ENCODE measurements at regions of chr4 and their contacts with region 1.

Region 1: DNA sequence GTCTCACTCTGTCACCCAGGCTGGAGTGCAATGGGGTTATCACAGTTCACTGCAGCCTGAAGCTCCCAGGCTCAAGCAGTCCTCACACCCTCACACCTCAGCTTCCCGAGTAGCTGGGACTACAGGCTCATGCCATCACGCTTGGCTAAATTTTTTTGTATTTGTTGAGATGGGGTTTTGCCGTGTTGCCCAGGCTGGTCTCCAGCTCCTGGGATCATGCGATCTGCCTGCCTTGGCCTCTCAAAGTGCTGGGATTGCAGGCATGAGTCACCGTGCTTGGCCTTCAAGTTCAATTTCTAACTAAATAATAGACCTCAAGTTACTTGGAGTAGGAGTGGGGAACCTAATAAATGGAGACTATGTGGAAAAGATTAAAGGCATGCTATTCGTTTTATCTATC is 48.9 kb downstream of the MND1 start:
- DNase-seq: no peak
- ATAC-seq: no peak
- H3K4me3 ChIP-seq: no peak overlapping the region
- H3K4me3 Mint-ChIP-seq: no peak overlapping the region
- H3K27ac ChIP-seq: no peak overlapping the region
- H3K27ac Mint-ChIP-seq: no peak overlapping the region
- H3K4me1 ChIP-seq: no peaks in the 10 kb centered on the region
- H3K4me1 Mint-ChIP-seq: peaks cover 3% of the 10 kb centered on the region in 3 donors
- H3K27me3 ChIP-seq: no peaks in the 10 kb centered on the region
- H3K27me3 Mint-ChIP-seq: no peaks in the 10 kb centered on the region

Region 2: GRCh38 chr4:153344131-153345010 is 49.0 kb before region 1 on chr4 and contains the start of gene MND1:
- CTCF ChIA-PET with region 1: interaction called in 1 of 2 experiments, 10 read pairs
- POLR2A ChIA-PET with region 1: no interaction called
- DNase-seq: peak; percentile 69 to 93 (median 86)
- ATAC-seq: peak; percentile 90 to 95 (median 92)
- H3K4me3 ChIP-seq: peak within 1 kb of the TSS; percentile 82 to 95
- H3K4me3 Mint-ChIP-seq: peak within 1 kb of the TSS; percentile 84 to 95 (median 92)
- H3K27ac ChIP-seq: no peak within 1 kb of the TSS
- H3K27ac Mint-ChIP-seq: peak within 1 kb of the TSS; percentile 49 to 50
- H3K4me1 ChIP-seq: peaks cover 6 to 11% of the 10 kb centered on the region in 2 experiments
- H3K4me1 Mint-ChIP-seq: peaks cover 9 to 30% (median 15%) of the 10 kb centered on the region in 3 donors
- H3K27me3 ChIP-seq: no peaks in the 10 kb centered on the region
- H3K27me3 Mint-ChIP-seq: peaks cover 0 to 7% of the 10 kb centered on the region in 2 donors
- total RNA-seq, gene MND1: 0.53 to 1.1 (median 0.70) TPM in 3 of 5 donors, not detected in the others

Region 3: DNA sequence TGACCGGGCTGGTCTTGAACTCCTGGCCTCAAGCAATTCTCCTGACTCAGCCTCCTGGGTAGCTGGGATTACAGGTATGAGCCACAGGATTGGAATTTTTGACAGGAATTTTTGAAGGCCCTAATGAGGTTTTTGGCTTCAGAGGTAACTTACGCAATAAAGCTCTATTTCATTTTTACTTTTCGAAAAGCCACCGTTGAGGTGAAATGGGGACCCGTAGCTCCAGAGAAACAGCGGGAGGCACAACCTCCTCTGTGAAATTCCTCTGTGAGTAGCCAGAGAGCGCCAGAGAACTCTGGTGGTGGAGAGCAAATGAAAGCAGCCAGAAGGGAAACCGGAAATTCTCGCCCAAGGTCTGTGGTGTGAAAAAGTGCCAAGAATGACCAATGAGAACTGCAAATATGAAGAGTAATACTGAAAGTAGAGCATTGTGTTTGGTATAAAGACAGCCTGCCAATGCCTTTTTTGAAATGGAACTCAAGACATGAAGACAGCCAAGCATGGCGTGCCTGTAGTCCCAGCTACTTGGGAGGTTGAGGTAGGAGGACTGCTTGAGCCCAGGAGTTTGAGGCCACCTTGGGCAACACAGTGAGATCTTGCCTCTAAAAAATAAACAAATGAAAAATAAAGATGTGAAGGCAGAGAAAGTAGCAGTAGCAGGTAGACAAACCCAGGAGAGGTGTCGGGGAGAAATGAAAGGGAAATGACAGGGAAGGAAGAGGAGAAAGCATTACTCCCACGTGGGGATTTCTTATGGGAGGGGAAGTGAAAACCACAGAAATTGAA is 39.8 kb after region 1 on chr4:
- CTCF ChIA-PET with region 1: interaction called in 1 of 2 experiments, 11 read pairs
- POLR2A ChIA-PET with region 1: interaction called in 1 of 2 experiments, 3 read pairs
- DNase-seq: peak; percentile 13 to 83 (median 54)
- ATAC-seq: peak; percentile 67 to 82 (median 74)
- H3K4me3 ChIP-seq: peak overlapping the region; percentile 17 to 40
- H3K4me3 Mint-ChIP-seq: peak overlapping the region; percentile 79 to 85 (median 81)
- H3K27ac ChIP-seq: peak overlapping the region; percentile 69
- H3K27ac Mint-ChIP-seq: peak overlapping the region; percentile 95 to 99
- H3K4me1 ChIP-seq: peaks cover 37 to 40% of the 10 kb centered on the region in 2 experiments
- H3K4me1 Mint-ChIP-seq: peaks cover 61 to 71% (median 63%) of the 10 kb centered on the region in 3 donors
- H3K27me3 ChIP-seq: no peaks in the 10 kb centered on the region
- H3K27me3 Mint-ChIP-seq: no peaks in the 10 kb centered on the region

Region 4: GRCh38 chr4:154143720-154144119 is 750.3 kb after region 1 on chr4:
- CTCF ChIA-PET with region 1: no interaction called
- POLR2A ChIA-PET with region 1: no interaction called
- DNase-seq: no peak
- ATAC-seq: no peak
- H3K4me3 ChIP-seq: no peak overlapping the region
- H3K4me3 Mint-ChIP-seq: no peak overlapping the region
- H3K27ac ChIP-seq: no peak overlapping the region
- H3K27ac Mint-ChIP-seq: no peak overlapping the region
- H3K4me1 ChIP-seq: no peaks in the 10 kb centered on the region
- H3K4me1 Mint-ChIP-seq: no peaks in the 10 kb centered on the region
- H3K27me3 ChIP-seq: no peaks in the 10 kb centered on the region
- H3K27me3 Mint-ChIP-seq: peaks cover 0 to 3% of the 10 kb centered on the region in 2 donors

Measured in T-cell (primary cell).